ENCODE measurements at regions of chr1 and their contacts with region 1.

Region 1: GRCh38 chr1:19661721-19662228 is 2.9 kb upstream of the HTR6 start:
- DNase-seq: no peak

Region 2: GRCh38 chr1:19361611-19362147 is 300.1 kb before region 1 on chr1:
- CTCF ChIA-PET with region 1: interaction called, 13 read pairs
- POLR2A ChIA-PET with region 1: no interaction called
- DNase-seq: no peak

Measured in HEK293T (cell line).